ENCODE measurements at regions of chr17 and their contacts with region 1.

Region 1: DNA sequence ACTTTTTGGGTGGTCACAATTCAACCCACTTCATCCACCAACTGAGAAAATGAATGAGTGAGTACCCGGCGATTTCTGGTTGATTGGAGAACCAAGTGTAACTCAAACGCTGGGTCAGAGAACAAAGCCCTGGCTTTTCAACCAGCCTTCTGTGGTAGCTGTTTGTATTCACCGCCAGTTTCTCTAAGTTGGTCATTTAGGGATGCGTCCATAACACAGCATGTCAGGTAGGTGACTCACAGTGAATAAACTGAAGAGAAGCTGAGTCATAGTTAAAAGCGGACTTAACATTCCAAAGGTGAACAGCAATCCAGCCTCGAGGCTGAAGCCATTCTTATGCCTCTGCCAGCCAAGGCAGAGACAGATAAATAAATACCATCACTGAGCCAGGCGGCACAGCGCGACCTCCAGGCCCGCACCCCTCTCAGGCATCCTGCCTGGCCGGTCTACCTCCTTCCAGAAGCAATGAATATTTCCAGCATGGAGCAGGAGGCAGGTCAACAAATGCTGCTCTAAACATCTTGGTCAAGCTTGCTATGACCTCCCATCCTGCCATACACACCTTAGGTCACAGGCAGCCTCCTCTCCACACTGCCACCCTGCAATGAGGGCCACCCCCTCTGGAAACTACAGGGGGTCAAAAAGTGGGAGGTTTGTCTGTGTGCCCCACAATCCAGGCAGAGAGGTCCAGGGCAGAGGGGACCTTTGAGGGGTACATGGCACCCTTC is 12.4 kb upstream of the CACNG4 start:
- DNase-seq: peak; percentile 67
- ATAC-seq: peak; percentile 92
- H3K4me3 ChIP-seq: no peak overlapping the region
- H3K27ac ChIP-seq: peak overlapping the region; percentile 96
- H3K4me1 ChIP-seq: peaks cover 43% of the 10 kb centered on the region
- H3K27me3 ChIP-seq: no peaks in the 10 kb centered on the region
- CTCF ChIP-seq: no peak

Region 2: DNA sequence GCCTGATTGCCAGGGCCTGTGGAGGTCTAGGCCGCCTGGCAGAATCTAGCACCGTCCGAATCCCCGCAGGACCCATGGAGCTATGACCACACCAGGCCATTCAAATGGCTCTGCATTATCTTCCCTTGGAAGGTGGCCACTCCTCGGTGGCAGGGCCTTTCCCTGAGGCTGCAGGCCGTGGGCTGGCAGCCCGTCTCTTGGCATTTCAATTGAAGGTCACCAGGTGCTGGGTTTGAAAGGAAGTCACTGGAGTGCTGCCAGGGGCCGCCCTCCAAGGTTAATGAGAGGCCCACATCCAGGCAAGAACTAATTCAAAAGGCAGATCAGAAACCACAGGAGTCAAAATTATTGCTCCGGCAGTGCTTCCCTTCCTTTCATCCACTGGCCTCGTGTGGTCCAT is 144.9 kb before region 1 on chr17:
- CTCF ChIA-PET with region 1: no interaction called
- POLR2A ChIA-PET with region 1: interaction called, 12 read pairs
- in situ Hi-C with region 1: no loop called
- intact Hi-C with region 1: no loop called
- DNase-seq: no peak
- ATAC-seq: no peak
- H3K4me3 ChIP-seq: no peak overlapping the region
- H3K27ac ChIP-seq: no peak overlapping the region
- H3K4me1 ChIP-seq: no peaks in the 10 kb centered on the region
- H3K27me3 ChIP-seq: no peaks in the 10 kb centered on the region
- CTCF ChIP-seq: no peak

Region 3: GRCh38 chr17:66994361-66994760 is 42.3 kb after region 1 on chr17:
- CTCF ChIA-PET with region 1: interaction called, 10 read pairs
- POLR2A ChIA-PET with region 1: no interaction called
- in situ Hi-C with region 1: no loop called
- intact Hi-C with region 1: no loop called
- DNase-seq: no peak
- ATAC-seq: no peak
- H3K4me3 ChIP-seq: no peak overlapping the region
- H3K27ac ChIP-seq: no peak overlapping the region
- H3K4me1 ChIP-seq: no peaks in the 10 kb centered on the region
- H3K27me3 ChIP-seq: no peaks in the 10 kb centered on the region
- CTCF ChIP-seq: no peak

Region 4: GRCh38 chr17:67151717-67152116 is 199.6 kb after region 1 on chr17:
- CTCF ChIA-PET with region 1: interaction called, 14 read pairs
- POLR2A ChIA-PET with region 1: no interaction called
- in situ Hi-C with region 1: no loop called
- intact Hi-C with region 1: no loop called
- DNase-seq: no peak
- ATAC-seq: no peak
- H3K4me3 ChIP-seq: no peak overlapping the region
- H3K27ac ChIP-seq: no peak overlapping the region
- H3K4me1 ChIP-seq: no peaks in the 10 kb centered on the region
- H3K27me3 ChIP-seq: no peaks in the 10 kb centered on the region
- CTCF ChIP-seq: no peak